T-cell (primary cell): ENCODE measurements at regions of chr17 and their contacts with region 1.

Region 1: DNA sequence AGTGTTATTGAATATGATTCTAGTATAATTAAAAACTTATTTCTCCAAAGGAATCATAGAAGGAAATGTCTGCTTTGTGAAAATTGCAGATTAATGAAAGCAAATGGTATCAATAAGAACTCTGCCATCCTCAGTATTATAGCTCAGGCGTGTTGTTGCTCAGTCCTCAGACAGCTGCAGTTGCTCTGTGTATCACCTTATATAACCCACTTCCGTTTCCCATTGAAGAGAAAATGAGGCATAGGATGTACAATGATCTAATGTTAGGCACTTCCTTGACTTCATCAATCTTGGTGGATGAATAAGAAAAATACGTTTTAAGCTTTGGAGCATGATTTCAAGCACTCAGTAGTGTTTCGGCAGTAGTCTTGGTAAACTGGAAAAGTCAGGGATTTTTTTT is 14.1 kb downstream of the MFSD11 start:
- DNase-seq: peak in 3 of 35 experiments; percentile 30 to 79 (median 38)
- ATAC-seq: peak; percentile 28 to 78 (median 64)
- H3K4me3 ChIP-seq: no peak overlapping the region
- H3K4me3 Mint-ChIP-seq: peak overlapping the region; percentile 64 to 94 (median 67)
- H3K27ac ChIP-seq: peak overlapping the region; percentile 93
- H3K27ac Mint-ChIP-seq: peak overlapping the region; percentile 98 to 99
- H3K4me1 ChIP-seq: peaks cover 11 to 40% of the 10 kb centered on the region in 2 experiments
- H3K4me1 Mint-ChIP-seq: peaks cover 26 to 28% (median 27%) of the 10 kb centered on the region in 3 donors
- H3K27me3 ChIP-seq: no peaks in the 10 kb centered on the region
- H3K27me3 Mint-ChIP-seq: no peaks in the 10 kb centered on the region

Region 2: DNA sequence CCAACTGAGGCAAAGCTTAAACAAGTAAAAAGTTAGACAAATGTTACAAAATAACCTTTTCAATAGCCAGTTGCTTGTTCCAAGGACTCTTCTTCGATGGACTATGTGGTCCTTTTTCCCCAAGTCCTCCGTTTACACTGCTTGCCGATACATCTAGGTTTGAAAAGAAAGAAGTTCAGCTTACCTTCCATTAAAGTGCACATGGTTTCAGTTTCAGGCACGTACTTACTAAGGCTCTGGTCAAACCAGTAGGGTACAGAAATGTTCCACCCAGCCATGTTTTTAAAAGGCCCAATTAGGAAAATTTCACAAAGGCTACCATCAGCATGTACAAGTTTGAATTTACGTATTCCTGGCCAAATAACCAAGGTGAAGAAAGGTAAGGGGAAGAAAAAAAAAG is 17.0 kb before region 1 on chr17:
- CTCF ChIA-PET with region 1: interaction called in 1 of 2 experiments, 12 read pairs
- POLR2A ChIA-PET with region 1: interaction called, 3 to 4 read pairs
- DNase-seq: peak in 1 of 35 experiments; percentile 63
- ATAC-seq: no peak
- H3K4me3 ChIP-seq: peak overlapping the region; percentile 59 to 81
- H3K4me3 Mint-ChIP-seq: peak overlapping the region; percentile 95 to 97 (median 96)
- H3K27ac ChIP-seq: peak overlapping the region; percentile 82
- H3K27ac Mint-ChIP-seq: peak overlapping the region; percentile 82 to 92
- H3K4me1 ChIP-seq: peaks cover 45 to 46% of the 10 kb centered on the region in 2 experiments
- H3K4me1 Mint-ChIP-seq: peaks cover 64 to 69% (median 68%) of the 10 kb centered on the region in 3 donors
- H3K27me3 ChIP-seq: no peaks in the 10 kb centered on the region
- H3K27me3 Mint-ChIP-seq: no peaks in the 10 kb centered on the region

Region 3: DNA sequence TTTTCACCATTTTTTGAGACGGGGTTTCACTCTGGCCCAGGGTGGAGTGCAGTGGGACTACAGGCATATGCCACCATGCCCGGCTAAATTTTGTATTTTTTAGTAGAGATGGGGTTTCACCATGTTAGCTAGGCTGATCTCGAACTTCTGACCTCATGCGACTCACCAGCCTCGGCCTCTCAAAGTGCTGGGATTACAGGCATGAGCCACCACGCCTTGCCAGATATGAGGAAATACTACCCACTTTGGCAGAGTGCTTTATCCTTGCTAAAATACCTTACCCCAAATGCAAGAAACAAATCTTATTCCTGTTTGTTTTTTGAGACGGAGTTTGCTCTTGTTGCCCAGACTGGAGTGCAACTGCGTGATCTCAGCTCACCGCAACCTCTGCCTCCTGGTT is 53.3 kb after region 1 on chr17:
- CTCF ChIA-PET with region 1: no interaction called
- POLR2A ChIA-PET with region 1: no interaction called
- DNase-seq: no peak
- ATAC-seq: no peak
- H3K4me3 ChIP-seq: no peak overlapping the region
- H3K4me3 Mint-ChIP-seq: no peak overlapping the region
- H3K27ac ChIP-seq: no peak overlapping the region
- H3K27ac Mint-ChIP-seq: no peak overlapping the region
- H3K4me1 ChIP-seq: no peaks in the 10 kb centered on the region
- H3K4me1 Mint-ChIP-seq: no peaks in the 10 kb centered on the region
- H3K27me3 ChIP-seq: no peaks in the 10 kb centered on the region
- H3K27me3 Mint-ChIP-seq: no peaks in the 10 kb centered on the region